Activated CD4-positive, alpha-beta memory T cell treated with anti-CD3 and anti-CD28 coated beads for 36 hours (primary cell): ENCODE measurements at regions of chr4 and their contacts with region 1.

Region 1: DNA sequence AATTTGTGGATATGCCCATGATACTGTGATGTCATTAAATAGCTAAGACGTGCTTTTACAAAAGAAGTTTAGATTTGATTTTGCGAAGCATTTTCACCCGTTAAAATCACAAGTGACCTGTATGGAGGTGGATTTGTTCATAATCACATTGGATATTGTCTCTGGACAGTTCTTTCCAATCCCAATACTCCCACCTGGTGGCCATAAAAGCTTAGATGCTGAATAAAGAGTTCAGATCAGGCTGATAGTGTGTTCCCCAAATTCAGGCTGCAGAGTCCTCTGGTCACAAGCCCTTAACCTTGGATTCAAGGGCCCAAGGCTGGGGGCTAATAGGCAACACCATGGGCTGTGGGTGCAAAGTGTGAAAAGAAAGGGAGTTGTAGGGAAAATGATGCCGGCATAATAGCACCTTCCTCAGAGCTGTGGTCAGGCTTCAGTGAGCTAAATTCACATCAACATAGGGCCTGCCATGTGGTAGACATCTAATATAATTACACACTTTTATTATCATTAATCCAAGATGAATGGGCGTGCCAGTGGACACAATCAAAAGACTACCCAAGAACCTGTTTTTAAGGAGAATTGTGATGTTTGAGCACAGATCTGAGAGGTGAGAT is 28.1 kb downstream of the SMIM43 start:
- DNase-seq: no peak
- H3K4me3 Mint-ChIP-seq: no peak overlapping the region
- H3K27ac Mint-ChIP-seq: no peak overlapping the region
- H3K4me1 Mint-ChIP-seq: no peaks in the 10 kb centered on the region
- H3K27me3 Mint-ChIP-seq: peaks cover 1% of the 10 kb centered on the region

Region 2: DNA sequence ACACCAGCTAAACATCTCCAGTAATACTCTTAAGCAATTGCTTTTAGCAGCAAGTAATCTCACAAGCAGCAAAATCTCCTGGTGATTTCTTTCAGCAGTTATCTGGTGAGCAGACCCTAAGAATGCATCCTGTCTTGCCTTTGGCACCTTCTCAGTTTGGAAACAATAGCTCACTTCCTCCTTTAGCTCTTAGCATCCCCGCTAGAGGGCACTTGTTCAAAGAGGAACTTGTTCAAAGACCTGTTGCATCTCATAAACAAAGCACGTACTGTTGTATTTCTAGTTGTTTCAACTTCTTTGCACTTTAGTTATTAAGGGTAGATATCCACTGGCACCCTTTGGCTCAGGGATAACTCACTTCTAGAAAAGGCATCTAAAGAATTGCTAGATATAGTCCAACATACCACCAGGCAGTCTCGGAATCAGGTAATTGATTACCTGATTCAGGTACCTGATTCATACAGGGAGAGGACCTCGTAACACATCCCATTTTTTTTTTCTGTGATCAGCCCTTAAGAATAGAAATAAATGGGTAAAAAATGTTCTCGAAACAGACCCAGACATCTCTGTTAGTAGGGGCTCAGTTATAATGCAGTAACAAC is 274.1 kb before region 1 on chr4:
- CTCF ChIA-PET with region 1: interaction called, 9 read pairs
- POLR2A ChIA-PET with region 1: no interaction called
- intact Hi-C with region 1: loop called (anchors 1 kb)
- DNase-seq: peak; percentile 35
- H3K4me3 Mint-ChIP-seq: no peak overlapping the region
- H3K27ac Mint-ChIP-seq: no peak overlapping the region
- H3K4me1 Mint-ChIP-seq: no peaks in the 10 kb centered on the region
- H3K27me3 Mint-ChIP-seq: peaks cover 26% of the 10 kb centered on the region

Region 3: GRCh38 chr4:121484633-121485032 is 252.2 kb before region 1 on chr4:
- CTCF ChIA-PET with region 1: interaction called, 14 read pairs
- POLR2A ChIA-PET with region 1: no interaction called
- intact Hi-C with region 1: no loop called
- DNase-seq: peak; percentile 31
- H3K4me3 Mint-ChIP-seq: no peak overlapping the region
- H3K27ac Mint-ChIP-seq: no peak overlapping the region
- H3K4me1 Mint-ChIP-seq: no peaks in the 10 kb centered on the region
- H3K27me3 Mint-ChIP-seq: peaks cover 25% of the 10 kb centered on the region

Region 4: DNA sequence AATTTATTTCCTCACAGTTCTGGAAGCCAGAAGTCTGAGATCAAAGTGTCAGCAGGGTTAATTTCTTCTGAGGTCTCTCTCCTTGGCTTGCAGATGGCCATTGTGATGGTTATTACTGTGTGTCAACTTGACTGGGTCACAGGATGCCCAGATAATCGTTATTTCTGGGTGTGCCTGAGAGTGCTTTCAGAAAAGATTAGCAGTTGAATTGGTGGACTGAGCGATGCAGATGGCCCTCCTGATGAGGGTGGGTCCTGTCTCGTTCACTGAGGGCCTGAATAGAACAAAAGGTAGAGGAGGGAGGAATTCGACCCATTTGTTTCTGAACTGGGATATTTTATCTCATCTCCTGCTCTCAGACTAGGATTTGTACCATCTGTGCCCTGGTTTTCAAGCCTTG is 12.4 kb after region 1 on chr4:
- CTCF ChIA-PET with region 1: no interaction called
- POLR2A ChIA-PET with region 1: no interaction called
- intact Hi-C with region 1: no loop called
- DNase-seq: no peak
- H3K4me3 Mint-ChIP-seq: no peak overlapping the region
- H3K27ac Mint-ChIP-seq: no peak overlapping the region
- H3K4me1 Mint-ChIP-seq: no peaks in the 10 kb centered on the region
- H3K27me3 Mint-ChIP-seq: peaks cover 27% of the 10 kb centered on the region